ENCODE measurements at regions of chr1 and their contacts with region 1.

Region 1: DNA sequence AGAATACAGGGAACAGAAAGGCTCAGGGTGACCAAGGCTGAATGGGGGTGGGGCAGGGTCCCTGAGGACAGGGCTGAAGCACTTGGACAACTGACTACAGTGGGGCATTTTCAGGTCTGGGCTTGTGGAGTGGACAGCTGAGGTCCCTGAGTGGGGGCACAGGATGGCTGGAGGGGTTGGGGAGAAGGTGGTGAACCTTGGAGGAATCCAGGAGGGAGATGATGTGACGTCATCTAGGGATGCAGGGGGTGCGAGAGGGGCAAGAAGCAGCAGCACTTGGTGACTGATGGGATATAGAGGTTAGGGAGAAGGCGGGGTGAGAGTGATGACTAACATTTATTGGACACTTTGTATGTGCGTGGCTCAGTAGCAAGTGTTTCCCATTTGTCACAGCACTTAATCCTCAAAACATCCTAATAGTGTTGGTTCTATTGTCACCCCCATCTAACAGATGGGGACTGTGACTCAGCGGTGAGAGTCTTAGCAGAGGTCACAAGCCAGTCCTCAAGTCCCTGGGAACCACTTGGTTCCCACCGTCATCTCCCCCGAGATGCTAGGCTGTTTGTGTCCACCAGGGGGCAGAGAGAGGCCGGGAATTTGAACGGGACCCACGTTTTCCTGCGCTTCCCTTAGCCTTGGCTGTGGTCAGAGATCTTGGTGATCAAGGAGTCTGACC is 27.9 kb upstream of the BMP8B start:
- DNase-seq: peak in 1 of 2 donors; percentile 33
- H3K4me3 ChIP-seq: no peak overlapping the region
- H3K27ac ChIP-seq: no peak overlapping the region
- H3K4me1 ChIP-seq: no peaks in the 10 kb centered on the region
- H3K27me3 ChIP-seq: no peaks in the 10 kb centered on the region
- CTCF ChIP-seq: peak; percentile 77 to 89 (median 89)

Region 2: DNA sequence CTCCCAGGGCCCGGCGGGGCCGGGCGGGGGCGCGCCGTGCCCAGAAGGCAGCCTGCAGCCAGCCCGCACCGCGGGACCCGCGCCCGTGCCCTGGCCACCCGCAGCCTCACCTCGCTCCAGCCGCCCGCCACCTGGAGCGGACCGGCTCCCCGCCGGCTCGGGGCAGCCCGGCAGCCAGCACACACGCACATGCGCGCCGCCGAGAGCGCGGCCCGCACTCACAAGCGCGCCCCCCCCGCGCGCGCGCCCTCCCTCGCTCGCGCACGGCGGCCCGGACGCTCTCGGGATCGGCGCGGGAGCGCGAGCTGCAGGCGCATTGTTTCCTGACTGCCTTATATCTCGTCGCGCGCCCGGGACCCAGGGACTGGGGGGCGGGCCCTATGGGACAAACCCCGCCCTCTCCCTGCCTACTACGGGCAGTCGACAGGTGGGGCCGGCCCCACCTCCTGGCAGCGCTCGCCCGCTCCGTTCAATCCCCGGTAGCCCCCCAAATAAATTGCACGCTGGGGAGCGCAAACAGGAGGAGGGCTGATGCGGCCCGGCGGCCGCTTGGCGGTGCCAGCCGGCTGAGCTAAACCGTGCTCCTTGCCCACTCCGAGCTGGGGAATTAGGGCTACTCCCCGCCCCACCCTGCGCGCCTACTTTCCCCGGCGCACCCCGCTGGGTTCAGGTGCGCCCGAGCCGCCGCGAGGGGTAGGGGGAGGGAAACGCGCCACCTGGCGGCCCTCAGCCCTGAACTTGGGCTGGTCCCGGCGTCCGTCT is 85.3 kb after region 1 on chr1 and contains the start of gene MYCL:
- intact Hi-C with region 1: loop called (anchors 1 kb)
- DNase-seq: peak in 1 of 2 donors; percentile 69
- H3K4me3 ChIP-seq: peak within 1 kb of the TSS; percentile 64 to 72
- H3K27ac ChIP-seq: no peak within 1 kb of the TSS
- H3K4me1 ChIP-seq: peaks cover 3 to 9% of the 10 kb centered on the region in 2 donors
- H3K27me3 ChIP-seq: no peaks in the 10 kb centered on the region
- CTCF ChIP-seq: peak; percentile 41 to 79 (median 65)
- total RNA-seq, gene MYCL: 22.1 TPM

Region 3: GRCh38 chr1:39973503-39974135 is 157.1 kb after region 1 on chr1:
- intact Hi-C with region 1: loop called (anchors 1 kb)
- DNase-seq: peak in 1 of 2 donors; percentile 83
- H3K4me3 ChIP-seq: no peak overlapping the region
- H3K27ac ChIP-seq: no peak overlapping the region
- H3K4me1 ChIP-seq: no peaks in the 10 kb centered on the region
- H3K27me3 ChIP-seq: no peaks in the 10 kb centered on the region
- CTCF ChIP-seq: peak; percentile 89 to 95 (median 90)

Region 4: DNA sequence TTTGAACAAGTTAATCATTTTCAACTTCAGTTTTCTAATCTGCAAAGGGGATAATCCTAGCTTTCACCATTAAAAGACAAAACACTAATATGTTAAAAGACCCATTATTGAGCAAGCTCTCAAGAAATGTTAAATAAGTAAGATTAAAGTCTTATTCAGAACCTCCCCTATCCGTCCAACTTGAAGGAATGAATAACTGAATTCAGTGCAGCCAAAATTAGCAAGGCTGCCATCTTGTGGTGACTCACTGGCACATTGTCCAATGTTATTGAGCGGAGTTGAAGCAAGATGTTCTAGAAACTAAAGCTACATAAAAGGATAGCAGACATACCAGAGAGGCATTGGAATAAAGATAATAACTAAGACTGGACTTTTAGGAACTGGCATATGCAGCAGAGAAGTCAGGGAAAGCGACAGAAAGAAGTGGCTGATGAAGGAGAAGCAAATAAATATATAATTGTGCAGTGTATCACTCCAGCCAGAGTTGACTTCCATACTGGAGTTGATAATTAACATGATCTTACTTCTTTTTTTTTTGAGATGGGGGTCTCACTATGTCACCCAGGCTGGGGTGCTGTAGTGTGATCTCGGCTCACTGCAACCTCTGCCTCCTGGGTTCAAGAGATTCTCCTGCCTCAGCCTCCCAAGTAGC is 215.8 kb after region 1 on chr1:
- intact Hi-C with region 1: loop called (anchors 2 kb)
- DNase-seq: peak in 1 of 2 donors; percentile 75
- H3K4me3 ChIP-seq: no peak overlapping the region
- H3K27ac ChIP-seq: no peak overlapping the region
- H3K4me1 ChIP-seq: peaks cover 5 to 15% of the 10 kb centered on the region in 2 donors
- H3K27me3 ChIP-seq: no peaks in the 10 kb centered on the region
- CTCF ChIP-seq: peak; percentile 35 to 54 (median 52)